ENCODE measurements at regions of chr1 and their contacts with region 1.

Region 1: DNA sequence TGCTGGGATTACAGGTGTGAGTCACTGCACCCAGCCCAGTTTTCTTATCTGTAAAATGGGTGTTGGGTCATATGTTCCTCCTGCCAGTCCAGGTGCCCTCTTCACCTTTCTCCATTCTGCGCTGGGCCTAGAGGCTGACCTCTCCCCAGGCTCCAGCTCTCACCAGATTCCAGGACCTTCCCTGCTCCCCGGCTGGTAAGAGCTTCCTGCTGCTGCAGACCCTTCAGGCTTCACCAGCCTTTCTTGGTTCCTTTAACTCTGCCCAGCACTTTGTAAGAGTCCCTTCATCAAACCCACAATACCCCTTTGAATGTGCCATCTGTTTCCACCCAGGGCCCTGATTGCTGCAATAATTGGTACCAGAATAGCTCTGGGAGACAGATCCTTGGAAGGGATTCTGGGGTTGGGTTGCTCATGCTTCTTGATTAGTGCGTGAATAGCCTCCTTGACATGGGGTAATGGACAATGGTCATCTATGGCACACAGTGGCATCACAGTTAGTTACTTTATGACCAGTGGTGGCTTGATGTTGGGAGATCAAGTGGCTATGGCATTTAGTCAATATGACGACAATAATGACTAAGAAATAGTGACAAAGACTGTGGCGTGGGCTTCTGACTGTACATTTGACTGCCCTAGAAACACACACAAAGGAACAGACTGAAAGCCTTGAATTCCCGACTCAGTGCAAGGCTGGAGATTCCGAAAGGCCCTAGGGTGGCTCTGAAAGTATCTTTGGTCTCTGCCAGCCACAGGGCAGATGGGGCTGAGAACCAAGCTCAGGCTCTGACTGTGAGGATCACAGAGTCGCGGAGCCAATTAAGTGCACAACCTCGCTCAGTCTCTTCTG is 67.3 kb downstream of the SLC9A1 start:
- DNase-seq: no peak
- ATAC-seq: no peak
- H3K4me3 ChIP-seq: no peak overlapping the region
- H3K27ac ChIP-seq: no peak overlapping the region
- H3K4me1 ChIP-seq: no peaks in the 10 kb centered on the region
- H3K27me3 ChIP-seq: no peaks in the 10 kb centered on the region
- CTCF ChIP-seq: no peak
- POLR2A ChIP-seq: no peak
- RAD21 ChIP-seq: no peak

Region 2: DNA sequence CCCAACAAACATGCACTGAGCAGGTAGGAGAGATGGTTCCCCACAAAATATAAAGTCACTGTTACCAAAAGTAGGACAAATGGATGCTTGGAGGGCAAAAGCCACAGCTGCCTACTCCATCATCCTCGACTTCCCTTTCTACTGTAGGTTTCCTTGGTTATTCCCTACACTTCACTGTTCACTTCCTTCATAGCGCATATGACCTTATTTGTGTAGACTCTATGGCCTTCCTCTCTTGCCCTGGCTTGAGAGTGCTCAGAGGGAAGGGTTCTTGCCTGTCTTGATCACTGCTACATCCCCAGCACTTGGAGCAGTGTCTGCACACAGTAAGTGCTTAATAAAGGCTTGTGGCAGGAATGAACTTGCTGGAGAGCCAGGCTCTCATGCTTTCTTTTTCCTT is 108.7 kb before region 1 on chr1:
- CTCF ChIA-PET with region 1: no interaction called
- POLR2A ChIA-PET with region 1: no interaction called
- RAD21 ChIA-PET with region 1: no interaction called
- intact Hi-C with region 1: loop called (anchors 5 kb)
- DNase-seq: no peak
- ATAC-seq: no peak
- H3K4me3 ChIP-seq: no peak overlapping the region
- H3K27ac ChIP-seq: no peak overlapping the region
- H3K4me1 ChIP-seq: peaks cover 4 to 8% of the 10 kb centered on the region in 2 experiments
- H3K27me3 ChIP-seq: no peaks in the 10 kb centered on the region
- CTCF ChIP-seq: no peak
- POLR2A ChIP-seq: no peak
- RAD21 ChIP-seq: no peak

Region 3: GRCh38 chr1:27102707-27103491 is 15.3 kb after region 1 on chr1:
- CTCF ChIA-PET with region 1: no interaction called
- POLR2A ChIA-PET with region 1: no interaction called
- RAD21 ChIA-PET with region 1: no interaction called
- intact Hi-C with region 1: no loop called
- DNase-seq: no peak
- ATAC-seq: peak; percentile 83
- H3K4me3 ChIP-seq: no peak overlapping the region
- H3K27ac ChIP-seq: no peak overlapping the region
- H3K4me1 ChIP-seq: peaks cover 9 to 42% of the 10 kb centered on the region in 2 experiments
- H3K27me3 ChIP-seq: no peaks in the 10 kb centered on the region
- CTCF ChIP-seq: peak; percentile 91 to 96 (median 95)
- POLR2A ChIP-seq: no peak
- RAD21 ChIP-seq: peak; percentile 97